OCI-LY7 (cell line): ENCODE measurements at regions of chr17 and their contacts with region 1.

Region 1: GRCh38 chr17:8118769-8119580 is 661 bp upstream of the ALOXE3 start:
- DNase-seq: peak; percentile 89
- H3K4me3 ChIP-seq: peak overlapping the region; percentile 79
- H3K27ac ChIP-seq: peak overlapping the region; percentile 79
- H3K4me1 ChIP-seq: peaks cover 40% of the 10 kb centered on the region
- CTCF ChIP-seq: peak; percentile 97

Region 2: GRCh38 chr17:7834962-7835813 is 283.8 kb before region 1 on chr17:
- CTCF ChIA-PET with region 1: no interaction called
- POLR2A ChIA-PET with region 1: no interaction called
- intact Hi-C with region 1: loop called (anchors 5 kb)
- DNase-seq: peak; percentile 95
- H3K4me3 ChIP-seq: peak overlapping the region; percentile 78
- H3K27ac ChIP-seq: peak overlapping the region; percentile 91
- H3K4me1 ChIP-seq: peaks cover 40% of the 10 kb centered on the region
- CTCF ChIP-seq: peak; percentile 81

Region 3: DNA sequence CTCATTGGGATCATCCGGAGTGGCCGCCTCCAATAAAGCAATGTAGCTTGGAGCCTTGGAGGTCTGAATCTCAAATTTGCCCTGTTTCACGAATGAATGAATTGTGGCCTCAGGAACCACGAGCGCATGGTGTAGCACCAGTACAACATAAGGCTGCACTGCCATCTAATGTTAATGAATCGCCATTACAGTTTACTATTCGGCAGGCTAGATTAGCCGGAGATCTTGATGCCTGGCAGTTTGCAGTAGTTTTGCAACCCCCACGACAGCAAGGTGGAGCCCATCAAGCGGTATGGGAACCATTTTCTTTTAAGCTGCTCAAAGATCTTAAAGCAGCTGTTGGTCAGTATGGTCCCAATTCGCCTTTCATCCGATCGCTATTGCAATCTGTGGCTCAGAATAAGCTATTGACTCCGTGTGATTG is 61.3 kb before region 1 on chr17:
- CTCF ChIA-PET with region 1: interaction called, 6 read pairs
- POLR2A ChIA-PET with region 1: no interaction called
- intact Hi-C with region 1: loop called (anchors 2 kb)
- DNase-seq: peak; percentile 90
- H3K4me3 ChIP-seq: no peak overlapping the region
- H3K27ac ChIP-seq: no peak overlapping the region
- H3K4me1 ChIP-seq: peaks cover 27% of the 10 kb centered on the region
- CTCF ChIP-seq: peak; percentile 85

Region 4: GRCh38 chr17:8138672-8139371 is 19.8 kb after region 1 on chr17:
- CTCF ChIA-PET with region 1: interaction called, 3 read pairs
- POLR2A ChIA-PET with region 1: interaction called, 7 read pairs
- intact Hi-C with region 1: loop called (anchors 1 kb)
- DNase-seq: peak; percentile 95
- H3K4me3 ChIP-seq: peak overlapping the region; percentile 70
- H3K27ac ChIP-seq: peak overlapping the region; percentile 74
- H3K4me1 ChIP-seq: peaks cover 18% of the 10 kb centered on the region
- CTCF ChIP-seq: peak; percentile 93

Region 5: GRCh38 chr17:8149419-8150193 is 30.6 kb after region 1 on chr17:
- CTCF ChIA-PET with region 1: no interaction called
- POLR2A ChIA-PET with region 1: no interaction called
- intact Hi-C with region 1: no loop called
- DNase-seq: no peak
- H3K4me3 ChIP-seq: no peak overlapping the region
- H3K27ac ChIP-seq: no peak overlapping the region
- H3K4me1 ChIP-seq: peaks cover 33% of the 10 kb centered on the region
- CTCF ChIP-seq: no peak

Region 6: DNA sequence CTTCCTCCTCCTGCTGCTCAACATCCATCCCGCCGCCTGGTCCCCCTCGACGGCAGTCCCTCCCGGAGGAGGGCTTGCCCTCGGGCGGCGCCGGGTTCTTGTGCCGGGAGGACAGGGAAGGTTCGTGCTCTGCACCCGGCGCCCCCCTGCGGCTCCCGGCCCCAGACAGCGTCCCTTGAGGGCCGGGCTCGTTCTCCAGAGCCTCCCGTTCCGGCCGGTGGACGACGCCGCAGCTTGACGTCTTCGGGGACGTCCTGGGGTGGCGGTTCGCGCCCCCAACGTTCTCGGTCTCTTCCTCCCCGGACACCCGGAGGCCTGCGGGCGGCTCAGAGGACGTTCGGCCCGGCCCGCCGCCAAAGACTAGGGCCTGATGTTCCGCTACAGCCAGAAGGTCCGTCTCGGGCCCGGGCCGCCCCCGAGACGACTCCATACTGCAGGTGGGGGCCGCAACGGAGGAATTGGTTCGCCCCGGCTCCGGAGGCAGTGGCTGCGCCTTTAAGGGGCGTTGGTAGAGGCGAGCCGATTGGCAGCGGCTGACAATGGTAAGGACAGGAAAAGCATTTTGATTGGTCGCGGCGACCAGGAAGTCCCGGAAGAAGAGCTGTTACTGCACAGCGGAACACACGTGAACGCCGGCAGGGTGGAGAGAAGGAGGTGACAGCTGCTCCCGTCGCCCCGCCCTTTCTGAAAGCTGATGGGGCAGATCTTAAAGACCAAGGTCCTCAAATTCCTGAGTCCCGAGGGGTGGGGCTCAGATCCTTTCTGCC is 70.9 kb after region 1 on chr17 and contains the start of gene BORCS6:
- CTCF ChIA-PET with region 1: no interaction called
- POLR2A ChIA-PET with region 1: no interaction called
- intact Hi-C with region 1: loop called (anchors 1 kb)
- DNase-seq: peak; percentile 99
- H3K4me3 ChIP-seq: peak within 1 kb of the TSS; percentile 83
- H3K27ac ChIP-seq: peak within 1 kb of the TSS; percentile 92
- H3K4me1 ChIP-seq: peaks cover 39% of the 10 kb centered on the region
- CTCF ChIP-seq: peak; percentile 52
- total RNA-seq, gene BORCS6: 13.9 and 14.3 TPM in 2 replicates

Region 7: DNA sequence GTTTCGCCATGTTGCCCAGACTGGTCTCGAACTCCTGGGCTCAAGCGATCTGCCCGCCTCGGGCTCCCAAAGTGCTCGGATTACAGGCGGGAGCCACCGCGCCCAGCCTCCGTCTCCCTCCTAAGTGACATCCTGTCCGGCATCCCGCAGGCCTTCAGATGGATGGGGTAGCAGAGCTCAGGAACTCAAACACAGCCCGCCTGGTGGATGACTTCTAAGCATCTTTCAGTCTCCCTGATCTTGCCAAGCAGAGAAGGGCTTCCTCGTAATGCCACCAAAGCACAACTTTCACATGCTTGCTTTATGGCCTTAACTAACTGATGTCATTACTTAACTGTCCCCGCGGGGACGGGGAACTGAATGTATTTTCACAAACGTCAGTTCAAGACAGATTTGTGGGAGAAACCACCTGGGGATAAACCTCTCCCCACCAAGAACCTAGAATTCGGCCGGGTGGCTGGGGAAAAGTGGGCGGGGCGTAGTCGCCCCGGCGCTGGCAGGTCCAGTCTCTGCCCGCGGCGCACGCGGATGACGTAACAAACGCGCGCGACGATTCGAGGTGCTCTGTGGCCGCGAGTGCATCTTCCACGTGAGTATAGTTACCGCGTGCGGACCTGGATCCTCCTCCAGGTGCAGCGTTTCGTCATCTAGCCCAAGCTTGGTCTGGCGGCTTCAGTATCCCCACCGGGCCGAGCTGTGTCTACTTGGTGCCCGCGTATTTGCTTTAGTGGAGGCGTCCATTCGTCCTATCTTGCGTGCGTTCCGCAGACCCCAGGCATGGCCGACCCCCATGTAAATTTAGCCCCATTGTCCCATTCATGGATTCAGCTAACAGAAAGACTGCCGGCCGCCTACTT is 130.0 kb after region 1 on chr17 and contains the start of gene PFAS:
- CTCF ChIA-PET with region 1: no interaction called
- POLR2A ChIA-PET with region 1: no interaction called
- intact Hi-C with region 1: loop called (anchors 2 kb)
- DNase-seq: peak; percentile 97
- H3K4me3 ChIP-seq: peak within 1 kb of the TSS; percentile 87
- H3K27ac ChIP-seq: peak within 1 kb of the TSS; percentile 99
- H3K4me1 ChIP-seq: peaks cover 39% of the 10 kb centered on the region
- CTCF ChIP-seq: no peak
- total RNA-seq, gene PFAS: 114 and 122 TPM in 2 replicates

Region 8: DNA sequence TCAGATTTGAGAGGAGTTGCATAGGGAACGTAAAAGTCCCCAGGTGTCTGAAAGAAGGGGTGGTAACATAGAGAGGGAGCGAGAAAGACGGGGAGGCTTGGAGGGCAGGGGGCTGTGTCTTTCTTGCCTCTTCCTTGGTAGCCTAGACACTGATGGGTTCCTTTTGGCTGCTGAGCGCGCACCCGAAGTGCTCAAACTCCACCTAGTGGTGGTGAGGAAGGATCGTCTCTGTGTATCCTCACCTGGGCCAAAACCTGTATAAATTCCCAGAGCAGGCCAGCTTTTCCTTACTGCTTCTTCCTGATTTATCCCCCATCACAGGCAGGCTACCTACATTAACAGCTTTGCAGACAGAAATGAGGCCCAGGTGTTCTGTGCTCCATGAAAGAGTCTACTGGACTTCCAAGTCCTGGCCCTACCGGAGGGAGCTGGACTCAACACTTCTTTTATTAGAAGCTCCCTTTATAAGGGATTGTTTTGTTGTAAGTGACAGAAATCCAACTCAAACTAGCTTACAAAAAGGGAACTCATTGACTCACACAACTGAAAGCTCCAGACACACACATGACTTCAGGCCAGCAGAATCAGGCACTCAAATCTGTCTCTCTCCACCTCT is 181.8 kb after region 1 on chr17:
- CTCF ChIA-PET with region 1: no interaction called
- POLR2A ChIA-PET with region 1: interaction called, 3 read pairs
- intact Hi-C with region 1: loop called (anchors 2 kb)
- DNase-seq: peak; percentile 87
- H3K4me3 ChIP-seq: no peak overlapping the region
- H3K27ac ChIP-seq: peak overlapping the region; percentile 4
- H3K4me1 ChIP-seq: peaks cover 6% of the 10 kb centered on the region
- CTCF ChIP-seq: peak; percentile 94